Activated CD4-positive, alpha-beta T cell treated with anti-CD3 and anti-CD28 coated beads for 36 hours (primary cell): ENCODE measurements at regions of chr1 and their contacts with region 1.

Region 1: GRCh38 chr1:167617153-167618147 is 12.6 kb upstream of the RCSD1 start:
- DNase-seq: no peak
- ATAC-seq: peak; percentile 75
- H3K4me3 Mint-ChIP-seq: peak overlapping the region; percentile 66
- H3K27ac Mint-ChIP-seq: peak overlapping the region; percentile 92
- H3K4me1 Mint-ChIP-seq: peaks cover 54% of the 10 kb centered on the region
- H3K27me3 Mint-ChIP-seq: no peaks in the 10 kb centered on the region

Region 2: GRCh38 chr1:167185974-167186657 is 431.3 kb before region 1 on chr1:
- CTCF ChIA-PET with region 1: no interaction called
- POLR2A ChIA-PET with region 1: no interaction called
- intact Hi-C with region 1: no loop called
- DNase-seq: no peak
- ATAC-seq: no peak
- H3K4me3 Mint-ChIP-seq: no peak overlapping the region
- H3K27ac Mint-ChIP-seq: no peak overlapping the region
- H3K4me1 Mint-ChIP-seq: no peaks in the 10 kb centered on the region
- H3K27me3 Mint-ChIP-seq: peaks cover 6% of the 10 kb centered on the region

Region 3: GRCh38 chr1:167627865-167628641 is 10.6 kb after region 1 on chr1:
- CTCF ChIA-PET with region 1: interaction called, 18 read pairs
- POLR2A ChIA-PET with region 1: interaction called, 4 read pairs
- intact Hi-C with region 1: no loop called
- DNase-seq: peak; percentile 87
- ATAC-seq: peak; percentile 85
- H3K4me3 Mint-ChIP-seq: peak overlapping the region; percentile 85
- H3K27ac Mint-ChIP-seq: peak overlapping the region; percentile 98
- H3K4me1 Mint-ChIP-seq: peaks cover 53% of the 10 kb centered on the region
- H3K27me3 Mint-ChIP-seq: no peaks in the 10 kb centered on the region

Region 4: GRCh38 chr1:167728818-167729410 is 111.5 kb after region 1 on chr1:
- CTCF ChIA-PET with region 1: no interaction called
- POLR2A ChIA-PET with region 1: no interaction called
- intact Hi-C with region 1: no loop called
- DNase-seq: no peak
- ATAC-seq: no peak
- H3K4me3 Mint-ChIP-seq: no peak overlapping the region
- H3K27ac Mint-ChIP-seq: no peak overlapping the region
- H3K4me1 Mint-ChIP-seq: peaks cover 14% of the 10 kb centered on the region
- H3K27me3 Mint-ChIP-seq: no peaks in the 10 kb centered on the region